Sigmoid colon (tissue), 7 donors: ENCODE measurements at regions of chr4 and their contacts with region 1.

Region 1: GRCh38 chr4:78517050-78517652 is 34.4 kb upstream of the ANXA3 start:
- DNase-seq: no peak
- H3K4me3 ChIP-seq: no peak overlapping the region
- H3K27ac ChIP-seq: no peak overlapping the region
- H3K4me1 ChIP-seq: peaks cover 0 to 13% (median 2%) of the 10 kb centered on the region in 4 donors
- H3K27me3 ChIP-seq: no peaks in the 10 kb centered on the region
- CTCF ChIP-seq: peak in 3 of 4 experiments; percentile 28 to 50 (median 44)
- EP300 ChIP-seq: no peak
- POLR2A ChIP-seq: no peak

Region 2: DNA sequence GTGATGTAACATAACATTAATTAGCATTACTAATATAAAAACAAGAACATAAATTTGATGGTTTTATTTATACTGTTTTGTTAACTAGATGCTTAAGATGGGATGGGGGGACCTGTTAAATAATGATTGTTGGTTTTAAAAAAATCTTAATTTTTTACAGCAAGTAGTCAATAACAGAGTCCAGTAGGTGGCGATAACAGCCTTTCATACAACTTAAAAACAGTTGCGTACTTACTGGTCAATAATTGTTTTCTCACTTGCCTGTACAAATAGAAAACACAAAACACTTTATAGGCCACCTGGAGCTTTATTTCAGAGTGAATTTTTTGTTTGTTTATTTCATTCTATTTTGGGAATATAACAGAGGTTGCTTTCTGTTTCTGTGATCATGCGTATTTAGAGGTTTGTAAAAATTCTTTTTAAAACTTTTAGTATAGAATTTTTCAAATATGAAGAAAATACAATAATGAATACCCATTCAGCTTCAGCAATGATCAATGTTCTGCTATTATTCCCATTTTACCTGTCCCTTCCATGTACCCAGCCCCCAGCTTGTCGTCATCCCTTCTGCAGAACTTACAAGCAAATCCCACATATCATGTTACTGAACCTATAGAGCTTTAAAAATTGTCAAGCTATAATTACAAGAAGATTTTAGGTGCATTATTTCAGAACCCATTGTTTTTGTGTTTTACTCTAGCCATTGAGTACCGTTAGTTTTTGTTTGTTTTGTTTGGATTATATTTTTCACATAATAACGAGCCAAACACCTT is 557.4 kb before region 1 on chr4:
- intact Hi-C with region 1: loop called (anchors 2 kb)
- DNase-seq: no peak
- H3K4me3 ChIP-seq: peak overlapping the region in 2 of 4 donors; percentile 6 to 21
- H3K27ac ChIP-seq: no peak overlapping the region
- H3K4me1 ChIP-seq: no peaks in the 10 kb centered on the region
- H3K27me3 ChIP-seq: no peaks in the 10 kb centered on the region
- CTCF ChIP-seq: peak in 3 of 4 experiments; percentile 44 to 53 (median 46)
- EP300 ChIP-seq: no peak
- POLR2A ChIP-seq: no peak

Region 3: DNA sequence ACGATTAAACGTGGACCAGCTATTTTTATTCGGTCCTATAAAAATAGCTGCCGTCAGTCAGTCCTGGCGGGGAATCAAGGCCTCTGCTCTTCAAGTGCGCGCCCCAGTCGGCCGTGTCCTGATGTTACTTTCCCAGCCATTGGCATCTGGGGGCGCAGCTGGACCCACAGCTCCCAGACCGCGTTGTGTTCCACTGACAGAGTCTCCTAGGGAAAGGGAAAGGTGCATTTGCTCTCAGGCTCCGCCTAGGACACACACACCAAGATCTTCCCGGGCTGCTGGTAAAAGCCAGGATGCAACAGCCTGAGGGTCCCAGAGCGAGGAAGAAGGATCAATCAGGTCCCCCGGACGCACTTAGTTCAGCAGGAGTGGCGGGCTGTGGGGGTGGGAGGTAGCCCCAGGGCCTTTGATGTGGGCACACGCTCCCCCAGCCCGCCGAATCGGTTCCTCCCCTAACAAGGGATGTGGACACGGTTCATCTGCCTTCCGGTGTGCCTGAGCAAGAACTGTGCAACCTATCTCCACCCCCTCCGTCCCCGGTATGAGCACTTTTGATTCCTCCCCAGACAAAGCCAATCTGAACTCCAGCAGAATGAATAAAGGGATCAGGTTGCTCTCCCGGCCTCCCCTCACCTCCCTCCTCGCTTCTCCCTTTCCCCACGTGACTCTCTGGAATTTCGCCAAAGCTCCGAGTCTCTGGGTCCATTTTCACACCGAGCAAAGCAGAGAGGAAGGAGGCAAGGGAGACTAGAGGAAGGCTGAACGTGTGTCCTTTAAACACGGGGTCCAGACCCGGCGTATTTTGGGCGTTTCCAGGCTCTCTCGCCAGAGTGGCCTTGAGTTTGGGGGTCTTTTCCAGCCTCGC is 460.7 kb before region 1 on chr4:
- intact Hi-C with region 1: loop called (anchors 10 kb)
- DNase-seq: peak; percentile 90
- H3K4me3 ChIP-seq: peak overlapping the region; percentile 42 to 63 (median 56)
- H3K27ac ChIP-seq: peak overlapping the region; percentile 75 to 89 (median 83)
- H3K4me1 ChIP-seq: peaks cover 0 to 32% (median 17%) of the 10 kb centered on the region in 4 donors
- H3K27me3 ChIP-seq: no peaks in the 10 kb centered on the region
- CTCF ChIP-seq: no peak
- EP300 ChIP-seq: peak in 1 of 4 donors; percentile 92
- POLR2A ChIP-seq: peak in 1 of 2 donors; percentile 20

Region 4: DNA sequence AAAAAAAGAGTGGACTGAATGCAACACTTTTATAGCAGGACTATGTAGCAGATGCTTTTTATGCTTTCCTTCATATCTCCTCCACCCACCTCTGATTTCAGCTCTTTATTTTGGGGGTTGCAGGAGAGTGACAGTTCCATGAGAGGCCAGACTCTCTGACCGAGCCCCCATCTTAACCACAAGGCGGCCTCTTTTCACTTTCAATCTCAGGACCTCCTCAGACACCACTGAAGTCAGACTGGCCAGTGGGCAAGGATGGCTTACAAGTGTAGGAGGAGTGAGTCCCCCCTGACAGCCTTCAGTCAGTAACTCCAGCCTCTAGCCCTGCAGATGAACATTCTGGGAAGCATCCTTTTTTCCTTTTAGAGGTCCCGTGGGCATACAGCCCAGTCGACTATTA is 319.2 kb before region 1 on chr4:
- intact Hi-C with region 1: no loop called
- DNase-seq: no peak
- H3K4me3 ChIP-seq: no peak overlapping the region
- H3K27ac ChIP-seq: no peak overlapping the region
- H3K4me1 ChIP-seq: no peaks in the 10 kb centered on the region
- H3K27me3 ChIP-seq: no peaks in the 10 kb centered on the region
- CTCF ChIP-seq: no peak
- EP300 ChIP-seq: no peak
- POLR2A ChIP-seq: no peak

Region 5: GRCh38 chr4:78551479-78552351 is 34.6 kb after region 1 on chr4 and contains the start of gene ANXA3:
- intact Hi-C with region 1: no loop called
- DNase-seq: no peak
- H3K4me3 ChIP-seq: peak within 1 kb of the TSS; percentile 27 to 68 (median 55)
- H3K27ac ChIP-seq: peak within 1 kb of the TSS; percentile 60 to 86 (median 78)
- H3K4me1 ChIP-seq: peaks cover 0 to 27% (median 17%) of the 10 kb centered on the region in 4 donors
- H3K27me3 ChIP-seq: no peaks in the 10 kb centered on the region
- CTCF ChIP-seq: no peak
- EP300 ChIP-seq: no peak
- POLR2A ChIP-seq: no peak
- total RNA-seq, gene ANXA3: 17.8 to 62.9 (median 34.3) TPM